Psoas muscle (tissue), 8 donors: ENCODE measurements at regions of chr13 and their contacts with region 1.

Region 1: GRCh38 chr13:37954201-37954996 is 84.8 kb upstream of the TRPC4 start:
- DNase-seq: no peak
- ATAC-seq: no peak
- H3K4me3 ChIP-seq: no peak overlapping the region
- H3K27ac ChIP-seq: no peak overlapping the region
- H3K4me1 ChIP-seq: no peaks in the 10 kb centered on the region
- H3K27me3 ChIP-seq: no peaks in the 10 kb centered on the region
- CTCF ChIP-seq: no peak

Region 2: GRCh38 chr13:36231236-36231635 is 1723.2 kb before region 1 on chr13:
- intact Hi-C with region 1: loop called in 1 of 2 experiments (anchors 5 kb)
- DNase-seq: no peak
- ATAC-seq: no peak
- H3K4me3 ChIP-seq: no peak overlapping the region
- H3K27ac ChIP-seq: no peak overlapping the region
- H3K4me1 ChIP-seq: no peaks in the 10 kb centered on the region
- H3K27me3 ChIP-seq: no peaks in the 10 kb centered on the region
- CTCF ChIP-seq: no peak